ENCODE measurements at regions of chr7 and their contacts with region 1.

Region 1: GRCh38 chr7:23570592-23571200 is 26.5 kb upstream of the CCDC126 start:
- DNase-seq: peak; percentile 84
- ATAC-seq: peak; percentile 94

Region 2: DNA sequence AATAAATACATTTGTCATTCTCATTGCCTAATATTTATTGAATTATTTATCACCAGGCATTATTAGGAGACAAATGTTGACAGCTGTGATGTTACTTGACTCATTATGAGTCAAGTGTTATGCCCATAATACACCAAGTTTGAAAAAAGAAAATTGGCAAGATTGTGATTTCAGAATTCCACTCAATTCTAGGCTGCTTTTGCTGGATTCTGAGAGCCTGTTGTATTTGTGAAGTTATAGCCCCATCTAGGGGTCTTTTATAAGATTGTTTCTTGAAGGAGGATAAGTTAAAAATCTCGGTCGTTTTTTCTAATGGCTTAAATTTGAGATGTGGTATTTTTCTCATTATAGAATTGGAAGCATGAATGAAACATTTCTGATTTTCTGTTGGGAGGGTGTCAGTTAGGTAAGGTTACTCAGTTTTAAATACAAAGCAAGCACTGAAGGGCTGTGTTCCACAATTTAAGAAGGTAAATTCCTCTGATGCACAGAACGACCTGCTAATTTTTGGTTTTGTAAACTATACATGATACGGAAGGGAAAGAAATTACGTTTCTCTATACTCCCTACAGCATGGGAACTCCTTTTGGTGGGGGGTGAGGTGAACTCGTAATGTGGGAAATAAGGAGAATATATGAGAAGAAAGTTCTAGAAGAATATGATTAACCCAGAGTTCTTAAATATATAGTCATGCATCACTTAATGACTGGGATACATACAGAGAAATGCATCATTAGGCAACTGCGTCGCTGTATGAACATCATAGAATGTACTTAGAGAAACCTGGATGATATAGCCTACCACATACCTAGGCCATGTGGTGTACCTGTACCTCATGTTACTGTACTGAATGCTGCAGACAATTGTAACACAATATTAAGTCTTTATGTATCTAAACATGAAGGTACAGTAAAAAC is 141.9 kb after region 1 on chr7:
- intact Hi-C with region 1: loop called (anchors 10 kb)
- DNase-seq: no peak
- ATAC-seq: peak; percentile 63

Measured in sciatic nerve (tissue), 2 donors.